Activated CD4-positive, alpha-beta memory T cell treated with anti-CD3 and anti-CD28 coated beads for 36 hours (primary cell): ENCODE measurements at regions of chr1 and their contacts with region 1.

Region 1: DNA sequence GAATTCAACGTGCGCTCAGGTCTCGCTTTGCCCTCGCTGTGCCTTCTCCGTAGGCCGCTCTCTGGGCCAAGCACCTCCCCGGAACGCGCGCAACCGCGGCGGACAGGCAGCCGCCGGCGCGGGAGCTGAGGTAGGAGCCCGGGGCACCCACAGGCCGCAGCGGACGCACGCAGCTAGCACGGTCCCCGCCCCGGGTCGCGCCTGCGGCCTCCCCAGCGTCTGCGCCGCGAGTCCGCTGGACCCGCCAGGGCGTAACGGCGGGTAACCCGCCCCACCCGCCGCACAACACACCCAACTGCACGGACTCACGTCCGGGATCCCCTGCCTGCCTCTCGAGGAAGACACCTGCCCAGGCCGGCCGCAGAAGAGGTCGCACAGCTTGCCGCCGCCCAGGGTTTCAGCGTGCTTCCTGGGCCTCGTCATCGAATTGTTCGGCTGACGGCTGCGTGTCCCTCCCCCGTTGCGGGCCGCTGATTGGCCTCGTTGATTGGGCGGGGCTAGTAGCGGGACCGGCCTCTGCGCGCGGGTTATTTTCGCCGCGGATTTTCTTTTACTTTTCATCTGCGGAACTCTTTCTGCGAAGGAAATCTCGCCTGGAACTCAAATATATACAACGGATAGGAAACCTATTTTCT is at the start of gene CLCC1:
- DNase-seq: peak; percentile 96
- H3K4me3 Mint-ChIP-seq: peak within 1 kb of the TSS; percentile 82
- H3K27ac Mint-ChIP-seq: peak within 1 kb of the TSS; percentile 87
- H3K4me1 Mint-ChIP-seq: peaks cover 28% of the 10 kb centered on the region
- H3K27me3 Mint-ChIP-seq: peaks cover 2% of the 10 kb centered on the region
- total RNA-seq, gene CLCC1: 17.1 to 18.6 TPM

Region 2: GRCh38 chr1:108746372-108747205 is 216.6 kb before region 1 on chr1 and contains the start of gene STXBP3:
- CTCF ChIA-PET with region 1: no interaction called
- POLR2A ChIA-PET with region 1: no interaction called
- intact Hi-C with region 1: loop called (anchors 1 kb)
- DNase-seq: peak; percentile 100
- H3K4me3 Mint-ChIP-seq: peak within 1 kb of the TSS; percentile 95
- H3K27ac Mint-ChIP-seq: peak within 1 kb of the TSS; percentile 97
- H3K4me1 Mint-ChIP-seq: peaks cover 28% of the 10 kb centered on the region
- H3K27me3 Mint-ChIP-seq: no peaks in the 10 kb centered on the region
- total RNA-seq, gene STXBP3: 40.8 to 46.8 TPM

Region 3: GRCh38 chr1:108758796-108759195 is 204.4 kb before region 1 on chr1:
- CTCF ChIA-PET with region 1: no interaction called
- POLR2A ChIA-PET with region 1: no interaction called
- intact Hi-C with region 1: no loop called
- DNase-seq: no peak
- H3K4me3 Mint-ChIP-seq: no peak overlapping the region
- H3K27ac Mint-ChIP-seq: no peak overlapping the region
- H3K4me1 Mint-ChIP-seq: peaks cover 7% of the 10 kb centered on the region
- H3K27me3 Mint-ChIP-seq: no peaks in the 10 kb centered on the region

Region 4: GRCh38 chr1:108877348-108878159 is 85.6 kb before region 1 on chr1:
- CTCF ChIA-PET with region 1: no interaction called
- POLR2A ChIA-PET with region 1: interaction called, 3 read pairs
- intact Hi-C with region 1: loop called (anchors 5 kb)
- DNase-seq: no peak
- H3K4me3 Mint-ChIP-seq: peak overlapping the region; percentile 90
- H3K27ac Mint-ChIP-seq: peak overlapping the region; percentile 33
- H3K4me1 Mint-ChIP-seq: peaks cover 15% of the 10 kb centered on the region
- H3K27me3 Mint-ChIP-seq: no peaks in the 10 kb centered on the region

Region 5: GRCh38 chr1:109090196-109091077 is 127.3 kb after region 1 on chr1 and contains the start of gene TMEM167B:
- CTCF ChIA-PET with region 1: no interaction called
- POLR2A ChIA-PET with region 1: no interaction called
- intact Hi-C with region 1: loop called (anchors 2 kb)
- DNase-seq: peak; percentile 94
- H3K4me3 Mint-ChIP-seq: peak within 1 kb of the TSS; percentile 88
- H3K27ac Mint-ChIP-seq: peak within 1 kb of the TSS; percentile 92
- H3K4me1 Mint-ChIP-seq: peaks cover 28% of the 10 kb centered on the region
- H3K27me3 Mint-ChIP-seq: no peaks in the 10 kb centered on the region
- total RNA-seq, gene TMEM167B: 31.9 to 32.6 TPM